ENCODE measurements at regions of chr1 and their contacts with region 1.

Region 1: DNA sequence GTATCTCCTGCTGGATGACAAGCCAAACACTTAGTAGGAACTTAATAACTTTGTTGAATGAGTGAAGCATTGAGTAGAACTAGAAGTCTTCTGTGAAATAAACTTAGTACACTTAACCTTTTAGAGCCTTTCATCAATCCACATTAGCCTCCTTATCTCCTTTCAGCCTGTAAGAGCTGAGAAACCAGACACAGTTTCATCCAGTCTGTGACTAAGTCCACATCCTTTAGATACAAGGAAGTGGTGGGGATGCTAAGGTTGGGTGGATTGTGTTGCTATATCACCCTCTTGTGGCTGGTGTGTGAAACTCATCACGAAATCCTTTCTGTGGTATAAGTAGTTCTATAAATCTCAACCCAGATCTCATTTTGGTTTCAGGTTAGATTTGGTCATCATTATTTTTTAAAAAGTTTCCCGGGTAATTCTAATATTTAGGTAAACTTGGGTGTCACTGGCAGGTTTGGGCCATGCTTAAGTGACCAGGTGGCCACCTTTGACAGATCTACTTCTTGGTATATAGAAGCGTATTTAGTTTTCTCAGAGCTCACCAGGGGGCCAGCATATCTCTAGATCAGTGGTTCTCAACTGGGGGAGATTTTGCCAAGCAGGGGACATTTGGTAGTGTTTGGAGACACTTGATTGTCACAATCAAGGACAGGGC is 27.8 kb upstream of the CD84 start:
- DNase-seq: peak; percentile 57
- CTCF ChIP-seq: peak; percentile 64

Region 2: GRCh38 chr1:160354388-160354985 is 252.7 kb before region 1 on chr1:
- CTCF ChIA-PET with region 1: interaction called, 17 read pairs
- POLR2A ChIA-PET with region 1: interaction called, 3 read pairs
- DNase-seq: no peak
- CTCF ChIP-seq: peak; percentile 40

Region 3: DNA sequence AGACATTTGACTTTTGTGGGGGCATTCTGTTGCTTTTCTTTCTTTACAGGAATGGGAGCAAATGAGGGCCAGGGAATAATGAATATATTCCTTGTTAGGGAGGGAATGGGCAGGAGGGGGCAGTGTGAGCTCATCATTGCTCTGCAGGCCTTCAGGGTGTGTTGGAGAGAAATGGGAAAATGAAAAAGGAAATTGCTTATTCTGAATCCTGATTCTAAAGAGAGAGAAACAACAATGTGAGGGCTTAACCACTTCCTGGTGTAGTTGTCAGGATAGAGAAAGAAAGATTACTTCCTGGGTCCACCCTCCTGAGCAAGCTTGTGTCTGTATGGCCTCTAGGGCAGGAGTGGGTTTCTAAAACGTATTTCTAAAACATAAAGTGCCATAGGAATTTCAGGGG is 178.5 kb before region 1 on chr1:
- CTCF ChIA-PET with region 1: interaction called, 114 read pairs
- POLR2A ChIA-PET with region 1: no interaction called
- DNase-seq: peak; percentile 47
- CTCF ChIP-seq: peak; percentile 53

Region 4: GRCh38 chr1:160539990-160540858 is 66.9 kb before region 1 on chr1:
- CTCF ChIA-PET with region 1: interaction called, 30 read pairs
- POLR2A ChIA-PET with region 1: no interaction called
- DNase-seq: peak; percentile 65
- CTCF ChIP-seq: no peak

Region 5: GRCh38 chr1:160558660-160559380 is 48.3 kb before region 1 on chr1:
- CTCF ChIA-PET with region 1: interaction called, 95 read pairs
- POLR2A ChIA-PET with region 1: no interaction called
- DNase-seq: no peak
- CTCF ChIP-seq: no peak

Region 6: DNA sequence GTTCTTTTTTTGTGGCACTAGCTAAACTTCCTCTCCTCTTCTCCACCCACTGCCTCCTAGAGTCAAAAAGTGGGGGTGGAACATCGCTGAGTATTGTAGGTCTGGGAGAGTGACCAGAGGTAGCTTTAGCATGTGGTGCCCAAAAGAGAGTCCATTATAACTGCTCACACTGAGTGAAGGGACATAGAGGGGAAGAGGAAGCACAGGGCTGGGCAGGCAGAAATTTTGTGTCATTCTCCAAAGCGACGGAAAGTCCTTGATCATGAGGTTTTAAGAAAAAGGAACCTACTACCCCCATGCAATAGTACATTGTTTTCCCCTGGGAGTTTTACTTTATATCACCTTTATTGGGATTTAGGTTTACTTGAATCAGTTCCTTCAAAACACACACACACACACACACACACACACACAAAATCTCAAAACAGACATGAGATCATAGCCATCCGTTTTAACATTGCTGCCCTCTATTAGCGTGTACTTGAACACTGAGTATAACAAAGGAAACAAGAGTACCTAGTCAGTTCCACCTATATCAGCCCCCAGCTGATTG is 32.0 kb before region 1 on chr1:
- CTCF ChIA-PET with region 1: interaction called, 54 read pairs
- POLR2A ChIA-PET with region 1: no interaction called
- DNase-seq: peak; percentile 22
- CTCF ChIP-seq: no peak

Region 7: GRCh38 chr1:160618763-160619274 is 11.7 kb after region 1 on chr1:
- CTCF ChIA-PET with region 1: interaction called, 94 read pairs
- POLR2A ChIA-PET with region 1: no interaction called
- DNase-seq: no peak
- CTCF ChIP-seq: peak; percentile 64

Measured in GM10248 (cell line).